Left cardiac atrium (tissue), 4 donors: ENCODE measurements at regions of chr1 and their contacts with region 1.

Region 1: DNA sequence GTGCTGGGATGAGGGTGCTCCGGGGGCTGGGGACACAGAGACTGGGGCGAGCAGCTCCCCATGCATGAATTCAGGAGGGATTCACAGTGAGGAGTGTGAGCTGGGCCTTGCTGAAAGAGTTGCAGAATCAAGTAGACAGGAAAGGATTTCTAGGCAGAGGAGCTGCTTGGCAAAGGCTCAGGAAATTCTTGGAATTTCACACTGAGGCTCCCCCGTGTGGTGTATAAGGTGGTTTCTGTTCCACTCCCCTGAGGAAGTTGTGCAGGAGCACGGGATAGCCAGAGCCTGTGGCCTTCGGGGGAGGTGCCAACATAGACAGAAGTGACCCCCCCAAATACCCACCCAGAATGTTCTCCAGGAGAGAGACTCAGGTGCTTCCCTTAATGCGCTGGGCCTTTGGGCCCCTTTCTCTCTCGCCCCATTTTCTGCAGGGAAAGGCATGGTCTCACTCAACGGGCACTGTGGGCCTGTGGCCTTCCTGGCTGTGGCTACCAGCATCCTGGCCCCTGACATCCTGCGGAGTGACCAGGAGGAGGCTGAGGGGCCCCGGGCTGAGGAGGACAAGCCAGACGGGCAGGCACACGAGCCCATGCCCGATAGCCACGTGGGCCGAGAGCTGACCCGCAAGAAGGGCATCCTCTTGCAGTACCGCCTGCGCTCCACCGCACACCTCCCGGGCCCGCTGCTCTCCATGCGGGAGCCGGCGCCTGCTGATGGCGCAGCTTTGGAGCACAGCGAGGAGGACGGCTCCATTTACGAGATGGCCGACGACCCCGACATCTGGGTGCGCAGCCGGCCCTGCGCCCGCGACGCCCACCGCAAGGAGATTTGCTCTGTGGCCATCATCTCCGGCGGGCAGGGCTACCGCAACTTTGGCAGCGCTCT is 58.5 kb upstream of the ACTL8 start:
- DNase-seq: no peak
- ATAC-seq: peak; percentile 46 to 65

Region 2: DNA sequence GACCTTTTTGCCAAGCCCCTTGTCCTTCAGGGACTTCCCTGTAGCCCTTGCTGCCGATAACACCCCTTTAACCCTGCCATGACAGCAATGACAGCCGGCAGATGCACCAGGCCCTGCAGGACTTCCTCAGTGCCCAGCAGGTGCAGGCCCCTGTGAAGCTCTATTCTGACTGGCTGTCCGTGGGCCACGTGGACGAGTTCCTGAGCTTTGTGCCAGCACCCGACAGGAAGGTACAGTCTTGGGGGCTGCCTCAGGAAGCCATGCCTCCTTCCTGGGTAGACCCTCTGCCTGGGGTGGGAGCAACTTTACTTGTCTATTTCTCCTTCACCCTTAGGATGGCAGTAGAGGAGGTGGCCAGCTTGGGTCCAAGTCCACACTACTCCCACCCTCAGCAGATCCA is 340.8 kb before region 1 on chr1:
- intact Hi-C with region 1: no loop called
- DNase-seq: no peak
- ATAC-seq: no peak

Region 3: GRCh38 chr1:17569200-17570161 is 127.2 kb before region 1 on chr1:
- intact Hi-C with region 1: no loop called
- DNase-seq: peak; percentile 85
- ATAC-seq: peak; percentile 83 to 85

Region 4: DNA sequence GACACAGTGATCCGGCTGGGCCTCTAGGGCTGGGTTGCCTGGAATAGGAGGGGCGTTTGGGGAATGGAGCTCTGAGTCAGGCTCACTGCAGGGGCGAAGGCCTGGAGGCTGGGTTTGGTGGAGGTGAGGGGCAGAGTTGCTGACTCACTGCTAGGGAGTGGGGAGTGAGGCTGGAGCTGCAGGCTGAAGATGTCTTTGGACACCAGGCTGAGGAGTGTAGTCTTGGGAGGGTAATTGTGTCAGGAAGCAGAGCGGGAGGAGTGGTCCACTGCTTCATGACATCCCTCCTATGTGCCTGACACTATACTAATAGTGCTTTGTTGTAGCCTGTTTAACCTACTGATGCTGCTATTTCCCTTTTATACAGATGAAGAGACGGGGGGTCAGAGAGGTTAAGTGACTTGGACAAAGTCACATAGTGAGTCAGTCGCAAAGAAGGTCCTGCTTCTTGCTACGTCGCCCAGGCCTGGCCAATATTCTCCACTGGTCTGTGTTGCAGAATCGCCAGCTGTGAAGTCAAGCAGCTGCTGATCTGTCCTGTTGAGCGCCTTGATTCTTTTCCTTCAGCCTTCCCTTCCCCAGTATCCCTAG is 72.1 kb after region 1 on chr1:
- intact Hi-C with region 1: loop called in 1 of 2 experiments (anchors 10 kb)
- DNase-seq: peak; percentile 69
- ATAC-seq: peak; percentile 5 to 89

Region 5: GRCh38 chr1:17826165-17826488 is 129.5 kb after region 1 on chr1:
- intact Hi-C with region 1: loop called in 1 of 2 experiments (anchors 10 kb)
- DNase-seq: peak; percentile 51
- ATAC-seq: peak in 1 of 2 donors; percentile 51